ENCODE measurements at regions of chr21 and their contacts with region 1.

Region 1: GRCh38 chr21:31363720-31364119 is 19.7 kb upstream of the TIAM1 start:
- DNase-seq: peak; percentile 35
- ATAC-seq: peak; percentile 38
- H3K4me3 Mint-ChIP-seq: peak overlapping the region; percentile 15
- H3K27ac Mint-ChIP-seq: peak overlapping the region; percentile 79
- H3K4me1 Mint-ChIP-seq: peaks cover 40% of the 10 kb centered on the region
- H3K27me3 Mint-ChIP-seq: no peaks in the 10 kb centered on the region
- CTCF ChIP-seq: no peak

Region 2: GRCh38 chr21:31316488-31317169 is 47.1 kb before region 1 on chr21:
- CTCF ChIA-PET with region 1: no interaction called
- POLR2A ChIA-PET with region 1: no interaction called
- intact Hi-C with region 1: no loop called
- DNase-seq: no peak
- ATAC-seq: no peak
- H3K4me3 Mint-ChIP-seq: no peak overlapping the region
- H3K27ac Mint-ChIP-seq: no peak overlapping the region
- H3K4me1 Mint-ChIP-seq: peaks cover 14% of the 10 kb centered on the region
- H3K27me3 Mint-ChIP-seq: no peaks in the 10 kb centered on the region
- CTCF ChIP-seq: no peak

Region 3: DNA sequence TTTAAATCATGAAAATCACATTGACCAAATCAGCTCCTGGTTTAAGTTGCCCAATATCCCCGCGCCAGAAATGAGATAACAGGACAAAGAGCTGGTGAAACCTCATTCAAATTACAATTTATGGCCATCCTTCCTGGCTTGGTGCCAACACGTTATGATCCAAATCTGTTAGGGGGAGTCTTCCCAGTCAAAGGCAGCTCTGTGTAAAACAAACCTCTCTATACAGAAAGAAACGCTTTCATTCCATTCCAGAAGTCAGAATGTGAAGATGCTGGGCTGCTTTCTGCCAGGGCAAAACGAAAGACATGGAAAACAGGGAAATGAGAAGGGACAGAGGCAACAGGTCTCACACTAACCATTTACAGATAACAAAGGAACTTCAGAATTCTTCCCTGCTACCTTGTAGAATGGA is 33.8 kb after region 1 on chr21:
- CTCF ChIA-PET with region 1: interaction called, 3 read pairs
- POLR2A ChIA-PET with region 1: no interaction called
- intact Hi-C with region 1: loop called (anchors 5 kb)
- DNase-seq: no peak
- ATAC-seq: no peak
- H3K4me3 Mint-ChIP-seq: no peak overlapping the region
- H3K27ac Mint-ChIP-seq: no peak overlapping the region
- H3K4me1 Mint-ChIP-seq: peaks cover 48% of the 10 kb centered on the region
- H3K27me3 Mint-ChIP-seq: no peaks in the 10 kb centered on the region
- CTCF ChIP-seq: no peak

Region 4: DNA sequence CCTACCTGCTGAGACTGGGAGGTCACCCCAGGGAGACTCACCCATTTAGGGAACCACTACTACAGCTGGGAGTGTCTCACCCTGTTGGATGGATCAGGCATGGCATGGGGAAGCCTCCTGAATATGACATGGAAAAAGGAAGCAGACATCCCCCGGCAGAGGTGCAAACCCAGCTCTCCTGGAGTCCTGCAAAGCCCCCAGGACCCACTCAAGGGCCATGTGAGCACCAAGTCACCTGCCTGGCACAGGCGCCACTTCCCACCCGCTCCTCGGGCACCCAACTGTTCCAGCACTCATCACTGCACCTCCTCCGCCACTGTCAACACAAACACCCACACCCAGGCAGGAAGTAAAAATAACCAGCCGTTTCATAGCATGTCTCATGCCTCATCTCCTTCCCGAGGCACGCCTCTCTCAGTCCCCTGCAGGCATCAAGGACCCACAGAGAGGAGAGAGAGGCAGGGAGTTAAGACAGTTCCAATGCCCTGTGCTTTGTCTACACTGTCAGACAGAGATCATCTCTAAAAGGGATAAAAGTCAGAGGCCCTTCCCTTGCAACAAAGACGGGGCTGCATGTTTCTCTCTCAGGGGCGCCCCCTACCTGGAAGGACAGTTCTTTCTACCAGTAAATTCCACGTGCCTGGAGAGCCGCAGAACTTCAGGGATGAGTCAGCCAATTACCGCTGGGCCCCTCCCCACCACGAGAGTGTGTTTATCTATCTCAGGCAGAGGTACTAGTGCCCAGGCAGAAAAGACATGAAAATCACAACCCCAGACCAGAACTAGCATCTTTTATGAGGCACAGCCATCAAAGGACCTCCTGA is 145.7 kb after region 1 on chr21:
- CTCF ChIA-PET with region 1: no interaction called
- POLR2A ChIA-PET with region 1: no interaction called
- intact Hi-C with region 1: no loop called
- DNase-seq: peak; percentile 92
- ATAC-seq: peak; percentile 87
- H3K4me3 Mint-ChIP-seq: peak overlapping the region; percentile 18
- H3K27ac Mint-ChIP-seq: peak overlapping the region; percentile 28
- H3K4me1 Mint-ChIP-seq: peaks cover 26% of the 10 kb centered on the region
- H3K27me3 Mint-ChIP-seq: peaks cover 2% of the 10 kb centered on the region
- CTCF ChIP-seq: peak; percentile 53

Measured in activated CD8-positive, alpha-beta T cell treated with anti-CD3 and anti-CD28 coated beads for 36 hours (primary cell).